Caco-2 (cell line): ENCODE measurements at regions of chr6 and their contacts with region 1.

Region 1: DNA sequence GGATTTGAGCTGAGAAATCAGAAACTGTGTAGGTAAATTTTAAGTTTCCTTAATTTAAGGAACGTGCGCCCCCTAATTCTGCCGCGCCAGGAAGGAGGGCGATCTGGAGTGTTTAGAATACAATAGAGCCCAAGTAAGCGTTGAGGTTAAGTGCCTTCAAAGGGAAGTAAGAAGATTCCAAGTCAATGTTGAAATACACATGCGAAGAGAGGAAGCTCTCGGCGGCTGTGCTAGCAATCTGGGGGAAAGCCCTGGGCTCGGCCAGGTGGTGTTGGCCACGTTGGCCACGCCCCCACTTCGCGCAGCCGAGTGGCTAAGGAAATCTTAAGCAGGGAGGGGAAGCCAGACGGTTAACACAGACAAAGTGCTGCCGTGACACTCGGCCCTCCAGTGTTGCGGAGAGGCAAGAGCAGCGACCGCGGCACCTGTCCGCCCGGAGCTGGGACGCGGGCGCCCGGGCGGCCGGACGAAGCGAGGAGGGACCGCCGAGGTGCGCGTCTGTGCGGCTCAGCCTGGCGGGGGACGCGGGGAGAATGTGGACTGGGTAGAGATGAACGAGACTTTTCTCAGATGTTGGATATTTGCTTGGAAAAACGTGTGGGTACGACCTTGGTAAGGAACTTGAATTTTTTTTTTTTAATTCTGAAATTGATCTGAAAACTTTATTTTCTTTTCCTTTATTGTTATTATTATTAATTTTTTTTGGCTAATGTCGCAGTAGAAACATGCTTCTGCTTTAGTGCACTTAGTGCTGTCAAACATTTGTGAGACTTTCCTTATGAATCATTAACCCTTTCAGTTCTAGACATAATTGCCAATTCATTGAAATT is at the start of gene PRDM1:
- DNase-seq: peak; percentile 93
- H3K4me3 ChIP-seq: peak within 1 kb of the TSS; percentile 56
- H3K4me3 Mint-ChIP-seq: peak within 1 kb of the TSS; percentile 87
- H3K27ac Mint-ChIP-seq: peak within 1 kb of the TSS; percentile 86
- H3K4me1 ChIP-seq: peaks cover 18% of the 10 kb centered on the region
- H3K4me1 Mint-ChIP-seq: peaks cover 36% of the 10 kb centered on the region
- H3K27me3 ChIP-seq: no peaks in the 10 kb centered on the region
- H3K27me3 Mint-ChIP-seq: no peaks in the 10 kb centered on the region
- CTCF ChIP-seq: peak; percentile 32 to 61
- total RNA-seq, gene PRDM1: 10.4 and 11.4 TPM in 2 replicates

Region 2: DNA sequence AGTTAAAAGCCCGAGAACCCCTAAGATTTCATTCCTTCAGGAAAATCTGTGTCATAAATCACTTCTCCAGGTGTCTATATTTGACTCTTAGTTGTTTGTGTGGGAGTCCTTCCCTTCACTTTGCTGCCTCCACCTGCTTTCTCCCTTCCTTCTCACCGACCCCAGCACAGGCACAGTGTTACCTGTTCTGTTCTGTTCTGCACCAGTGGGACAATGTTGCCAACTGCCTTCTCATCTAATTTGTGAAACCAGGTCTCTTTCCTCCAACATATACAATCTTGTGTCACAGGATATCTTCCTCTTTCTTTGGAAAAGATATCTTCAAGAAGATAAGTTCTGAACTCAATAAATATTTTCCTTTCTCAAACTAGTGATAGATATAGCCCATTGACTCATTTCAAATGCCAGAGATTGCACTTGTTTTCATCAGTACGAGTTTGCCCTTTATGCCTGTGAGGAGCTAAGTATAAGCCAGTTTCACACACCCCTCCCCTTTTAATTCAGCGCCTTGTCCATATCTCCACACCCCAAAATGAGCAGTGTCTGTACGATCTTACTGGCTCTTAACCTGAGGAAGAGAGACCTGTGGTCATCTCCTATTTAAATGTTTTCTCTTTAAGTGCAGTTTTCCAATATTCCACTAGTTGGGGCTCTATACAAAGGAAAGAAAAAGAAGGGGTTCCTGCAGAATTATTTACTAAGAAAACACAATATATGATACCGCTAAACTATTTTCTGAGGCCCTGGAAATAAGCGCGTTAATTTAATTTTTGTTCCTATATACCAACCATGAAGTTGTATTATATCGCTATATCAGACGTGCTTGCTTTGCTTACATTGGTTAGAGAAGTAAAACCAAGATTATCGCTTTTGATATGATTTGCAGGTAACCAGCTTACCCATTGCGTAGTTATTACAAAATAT is 601.7 kb before region 1 on chr6:
- CTCF ChIA-PET with region 1: interaction called, 3 read pairs
- POLR2A ChIA-PET with region 1: no interaction called
- intact Hi-C with region 1: loop called (anchors 1 kb)
- DNase-seq: peak in 1 of 2 experiments; percentile 50
- H3K4me3 ChIP-seq: no peak overlapping the region
- H3K4me3 Mint-ChIP-seq: peak overlapping the region; percentile 63
- H3K27ac Mint-ChIP-seq: peak overlapping the region; percentile 42
- H3K4me1 ChIP-seq: peaks cover 36% of the 10 kb centered on the region
- H3K4me1 Mint-ChIP-seq: peaks cover 55% of the 10 kb centered on the region
- H3K27me3 ChIP-seq: no peaks in the 10 kb centered on the region
- H3K27me3 Mint-ChIP-seq: no peaks in the 10 kb centered on the region
- CTCF ChIP-seq: peak; percentile 75 to 85

Region 3: GRCh38 chr6:105733565-105734162 is 352.5 kb before region 1 on chr6:
- CTCF ChIA-PET with region 1: no interaction called
- POLR2A ChIA-PET with region 1: no interaction called
- intact Hi-C with region 1: loop called (anchors 1 kb)
- DNase-seq: no peak
- H3K4me3 ChIP-seq: no peak overlapping the region
- H3K4me3 Mint-ChIP-seq: no peak overlapping the region
- H3K27ac Mint-ChIP-seq: no peak overlapping the region
- H3K4me1 ChIP-seq: no peaks in the 10 kb centered on the region
- H3K4me1 Mint-ChIP-seq: peaks cover 6% of the 10 kb centered on the region
- H3K27me3 ChIP-seq: no peaks in the 10 kb centered on the region
- H3K27me3 Mint-ChIP-seq: no peaks in the 10 kb centered on the region
- CTCF ChIP-seq: peak; percentile 47 to 74

Region 4: GRCh38 chr6:105935416-105935815 is 150.8 kb before region 1 on chr6:
- CTCF ChIA-PET with region 1: no interaction called
- POLR2A ChIA-PET with region 1: no interaction called
- intact Hi-C with region 1: loop called (anchors 1 kb)
- DNase-seq: no peak
- H3K4me3 ChIP-seq: no peak overlapping the region
- H3K4me3 Mint-ChIP-seq: no peak overlapping the region
- H3K27ac Mint-ChIP-seq: peak overlapping the region; percentile 49
- H3K4me1 ChIP-seq: peaks cover 24% of the 10 kb centered on the region
- H3K4me1 Mint-ChIP-seq: peaks cover 19% of the 10 kb centered on the region
- H3K27me3 ChIP-seq: no peaks in the 10 kb centered on the region
- H3K27me3 Mint-ChIP-seq: no peaks in the 10 kb centered on the region
- CTCF ChIP-seq: no peak

Region 5: DNA sequence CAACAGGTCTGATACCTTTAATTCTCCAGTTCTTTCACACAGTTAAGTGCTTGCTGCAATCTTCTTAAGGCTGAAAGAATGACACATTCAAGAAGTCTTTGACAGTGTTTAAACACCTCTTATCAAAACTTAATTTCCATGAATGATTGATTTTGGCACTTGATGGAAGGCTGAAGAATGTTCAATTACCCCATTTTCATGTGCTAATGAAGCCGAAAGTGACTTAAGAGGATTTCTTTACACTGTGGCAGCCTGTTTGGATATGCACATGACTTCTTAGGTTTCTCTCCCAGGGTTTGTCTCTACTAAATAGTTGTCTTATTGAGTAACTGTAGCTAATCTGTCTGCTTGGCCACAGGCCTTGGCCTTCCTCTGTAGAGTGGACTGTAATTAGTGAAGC is 81.2 kb before region 1 on chr6:
- CTCF ChIA-PET with region 1: no interaction called
- POLR2A ChIA-PET with region 1: no interaction called
- intact Hi-C with region 1: no loop called
- DNase-seq: no peak
- H3K4me3 ChIP-seq: no peak overlapping the region
- H3K4me3 Mint-ChIP-seq: no peak overlapping the region
- H3K27ac Mint-ChIP-seq: no peak overlapping the region
- H3K4me1 ChIP-seq: peaks cover 18% of the 10 kb centered on the region
- H3K4me1 Mint-ChIP-seq: peaks cover 21% of the 10 kb centered on the region
- H3K27me3 ChIP-seq: no peaks in the 10 kb centered on the region
- H3K27me3 Mint-ChIP-seq: no peaks in the 10 kb centered on the region
- CTCF ChIP-seq: no peak

Region 6: GRCh38 chr6:106053484-106054205 is 32.6 kb before region 1 on chr6:
- CTCF ChIA-PET with region 1: no interaction called
- POLR2A ChIA-PET with region 1: interaction called, 6 read pairs
- intact Hi-C with region 1: loop called (anchors 2 kb)
- DNase-seq: no peak
- H3K4me3 ChIP-seq: no peak overlapping the region
- H3K4me3 Mint-ChIP-seq: peak overlapping the region; percentile 56
- H3K27ac Mint-ChIP-seq: peak overlapping the region; percentile 74
- H3K4me1 ChIP-seq: peaks cover 81% of the 10 kb centered on the region
- H3K4me1 Mint-ChIP-seq: peaks cover 57% of the 10 kb centered on the region
- H3K27me3 ChIP-seq: no peaks in the 10 kb centered on the region
- H3K27me3 Mint-ChIP-seq: no peaks in the 10 kb centered on the region
- CTCF ChIP-seq: no peak

Region 7: DNA sequence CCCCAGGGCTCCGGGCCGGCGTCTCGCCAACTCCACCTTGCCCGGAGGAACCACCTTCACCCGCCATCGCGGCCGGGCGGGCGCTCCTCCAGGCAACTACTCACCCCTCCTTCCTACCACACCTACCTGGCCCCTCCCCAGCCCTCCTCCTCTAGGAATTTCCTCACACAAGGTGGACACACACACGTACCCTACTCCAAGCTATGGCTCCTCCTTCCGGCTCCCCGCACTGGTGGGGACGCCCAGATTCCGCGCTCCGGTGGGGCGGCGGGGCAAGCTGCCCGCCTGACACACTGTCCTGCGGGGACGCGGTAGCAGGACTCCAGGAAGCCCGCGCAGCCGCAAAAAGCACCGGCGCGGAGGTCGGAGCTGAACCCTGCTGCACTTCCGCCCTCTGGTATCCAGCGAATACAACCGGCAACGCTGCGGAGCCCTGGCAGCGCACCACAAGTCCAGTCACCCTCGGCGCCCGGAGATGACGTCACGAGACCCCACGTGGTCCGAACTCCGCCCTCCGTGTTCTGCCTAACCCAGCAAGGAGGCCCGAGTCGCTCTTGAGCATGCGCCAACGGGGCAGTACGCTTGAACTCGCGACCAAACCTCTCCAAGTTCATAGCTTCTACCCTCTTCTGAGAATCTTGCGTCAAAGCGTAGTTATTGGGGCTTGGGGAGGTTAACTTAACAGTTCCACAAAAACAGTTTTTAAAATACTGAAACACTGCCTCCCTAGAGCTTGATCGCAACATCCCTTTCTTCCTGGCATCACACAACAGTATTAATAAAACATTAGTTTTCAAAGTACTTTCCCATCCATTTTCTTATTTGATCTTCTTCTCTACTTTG is 239.4 kb after region 1 on chr6 and contains the start of gene ATG5:
- CTCF ChIA-PET with region 1: no interaction called
- POLR2A ChIA-PET with region 1: no interaction called
- intact Hi-C with region 1: loop called (anchors 1 kb)
- DNase-seq: peak; percentile 99
- H3K4me3 ChIP-seq: peak within 1 kb of the TSS; percentile 56
- H3K4me3 Mint-ChIP-seq: peak within 1 kb of the TSS; percentile 97
- H3K27ac Mint-ChIP-seq: peak within 1 kb of the TSS; percentile 98
- H3K4me1 ChIP-seq: peaks cover 11% of the 10 kb centered on the region
- H3K4me1 Mint-ChIP-seq: peaks cover 18% of the 10 kb centered on the region
- H3K27me3 ChIP-seq: no peaks in the 10 kb centered on the region; the same call in 1 of the 2 replicates
- H3K27me3 Mint-ChIP-seq: peaks cover 13% of the 10 kb centered on the region
- CTCF ChIP-seq: no peak
- total RNA-seq, gene ATG5: 25.6 and 26.9 TPM in 2 replicates